Activated CD8-positive, alpha-beta memory T cell treated with anti-CD3 and anti-CD28 coated beads, Interleukin-2, amount 10 ng/mL, durations not matched to agents 7 days and 5 days (primary cell): ENCODE measurements at regions of chr22 and their contacts with region 1.

Region 1: DNA sequence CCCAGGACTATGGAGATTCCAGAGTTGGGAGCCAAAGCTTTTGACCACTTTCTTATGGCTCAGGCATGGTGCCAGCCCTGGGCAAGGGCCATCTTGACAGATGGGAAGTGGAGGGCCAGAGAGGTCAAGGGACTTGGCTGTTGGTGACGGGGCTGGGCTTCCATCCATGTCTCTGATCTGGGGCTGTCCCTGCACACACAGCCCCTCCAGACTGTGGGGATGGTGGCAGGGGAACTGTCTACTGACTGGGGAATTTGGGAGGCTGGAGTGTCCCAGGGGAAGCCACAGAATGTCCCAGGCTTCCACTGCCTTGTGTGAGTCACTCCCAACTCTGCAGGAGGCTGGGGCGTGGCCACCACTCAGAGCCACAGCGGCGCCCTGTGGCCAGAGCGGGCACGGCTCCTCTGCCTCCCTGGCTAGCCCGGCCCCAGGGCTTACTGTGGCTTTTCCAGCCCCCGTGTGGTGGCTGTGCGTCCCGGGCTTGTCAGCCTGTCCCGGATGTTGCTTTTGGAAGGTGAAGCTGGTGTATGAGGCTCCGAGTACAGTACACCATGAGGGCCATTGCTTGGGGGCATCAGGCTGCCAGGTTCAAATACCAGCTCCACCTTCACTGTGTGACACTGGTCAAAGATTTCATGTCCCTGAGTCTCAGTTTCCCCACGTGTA is 19.6 kb downstream of the C22orf23 start:
- DNase-seq: peak; percentile 90
- ATAC-seq: peak; percentile 99
- H3K4me3 Mint-ChIP-seq: no peak overlapping the region
- H3K27ac Mint-ChIP-seq: peak overlapping the region; percentile 36
- H3K4me1 Mint-ChIP-seq: peaks cover 11% of the 10 kb centered on the region
- H3K27me3 Mint-ChIP-seq: no peaks in the 10 kb centered on the region

Region 2: DNA sequence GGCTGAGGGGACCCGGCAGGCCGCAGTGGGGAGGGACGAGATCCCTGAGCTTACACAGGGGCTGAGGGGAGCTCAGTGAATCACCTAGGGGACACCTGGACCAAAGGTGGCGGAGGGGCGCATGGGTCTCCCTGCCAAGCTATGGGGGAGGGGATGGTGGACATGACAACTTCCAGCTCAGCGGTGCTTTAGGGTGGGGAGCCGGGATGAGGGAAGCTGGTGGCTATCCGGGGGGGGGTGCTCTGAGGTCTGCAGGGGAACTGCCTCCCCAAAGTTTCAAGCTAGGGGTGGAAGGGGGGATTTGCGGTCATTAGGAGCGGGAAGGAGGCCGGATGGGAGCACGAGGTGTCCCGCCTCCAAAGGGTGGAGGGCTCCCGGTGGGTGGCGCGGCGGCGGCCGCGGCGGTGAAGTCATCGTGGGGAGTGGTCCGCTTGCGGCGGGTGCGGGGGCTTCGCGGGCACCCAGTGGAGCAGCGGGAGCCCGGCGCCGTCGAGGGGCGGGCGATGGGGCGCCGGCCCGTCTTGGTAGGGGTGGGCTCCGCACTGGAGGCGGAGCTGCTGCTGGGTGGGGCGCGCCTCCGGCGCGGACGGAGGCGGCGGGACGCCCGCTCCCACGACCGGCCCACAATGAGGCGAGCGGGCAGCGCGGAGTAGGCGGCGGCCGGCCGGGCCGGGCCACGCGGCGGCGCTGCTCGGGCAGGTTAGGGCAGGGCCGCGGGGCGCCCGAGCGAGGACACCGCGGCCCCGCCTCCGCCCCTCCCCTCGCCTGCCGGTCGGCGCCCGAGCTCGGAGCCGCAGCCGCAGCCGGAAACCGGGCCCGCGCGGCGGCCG is 28.1 kb before region 1 on chr22 and contains the start of gene MICALL1:
- CTCF ChIA-PET with region 1: interaction called, 16 read pairs
- DNase-seq: peak; percentile 69
- ATAC-seq: peak; percentile 89
- H3K4me3 Mint-ChIP-seq: peak within 1 kb of the TSS; percentile 66
- H3K27ac Mint-ChIP-seq: peak within 1 kb of the TSS; percentile 76
- H3K4me1 Mint-ChIP-seq: peaks cover 30% of the 10 kb centered on the region
- H3K27me3 Mint-ChIP-seq: no peaks in the 10 kb centered on the region
- total RNA-seq, gene MICALL1: 19.7 to 23.1 TPM

Region 3: DNA sequence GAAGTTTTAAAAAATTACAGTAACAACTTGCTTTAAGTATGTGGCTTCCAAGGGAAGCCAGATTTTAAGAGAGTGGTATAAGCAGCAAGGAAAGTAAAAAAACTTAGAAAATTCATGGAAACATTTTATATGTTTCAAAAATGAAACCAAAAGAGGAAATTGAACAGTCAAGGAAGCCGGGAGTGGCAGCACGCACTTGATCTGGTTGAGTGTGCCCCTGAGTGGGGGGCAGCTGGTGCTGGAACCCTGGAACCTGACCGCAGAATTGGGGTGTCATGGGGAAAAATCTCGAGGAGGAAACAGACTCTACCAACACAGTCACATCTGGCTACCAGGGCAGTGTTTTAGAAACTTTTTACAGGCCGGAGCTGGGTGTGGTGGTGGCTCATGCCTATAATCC is 13.7 kb before region 1 on chr22:
- CTCF ChIA-PET with region 1: interaction called, 13 read pairs
- DNase-seq: no peak
- ATAC-seq: peak; percentile 24
- H3K4me3 Mint-ChIP-seq: peak overlapping the region; percentile 21
- H3K27ac Mint-ChIP-seq: peak overlapping the region; percentile 81
- H3K4me1 Mint-ChIP-seq: peaks cover 7% of the 10 kb centered on the region
- H3K27me3 Mint-ChIP-seq: no peaks in the 10 kb centered on the region

Region 4: DNA sequence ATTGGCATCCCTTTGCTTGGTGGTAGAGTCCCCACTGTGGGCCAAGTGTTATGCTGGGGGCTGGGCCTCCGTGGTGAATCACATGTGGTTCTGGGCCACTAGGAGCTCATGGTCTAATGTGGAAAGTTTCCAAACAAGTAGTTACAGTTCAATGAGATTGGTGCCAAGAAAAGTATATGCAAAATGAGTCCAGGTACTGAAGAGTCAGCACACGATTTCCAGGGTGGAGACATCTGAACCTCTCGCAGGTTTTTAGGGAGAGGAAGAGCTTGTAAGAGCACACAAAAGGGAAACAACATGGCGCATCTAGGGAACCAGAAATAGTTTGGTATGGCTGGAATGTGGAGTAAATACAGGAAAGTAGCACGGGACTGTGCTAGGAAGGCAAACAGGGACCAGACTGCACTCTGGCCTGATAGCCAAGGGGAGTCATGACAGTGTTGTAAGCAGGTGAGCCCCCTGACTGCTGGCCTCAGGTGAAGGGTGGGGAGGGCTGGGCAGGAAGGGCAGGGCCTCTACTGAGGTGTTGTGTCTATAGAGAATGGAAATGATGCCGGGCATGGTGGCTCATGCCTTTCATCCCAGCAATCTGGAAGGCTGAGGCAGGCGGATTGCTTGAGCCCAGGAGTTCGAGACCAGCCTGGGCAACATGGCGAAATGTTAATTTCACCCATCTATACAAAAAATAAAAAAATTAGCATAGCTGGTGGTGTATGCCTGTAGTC is 32.3 kb after region 1 on chr22:
- CTCF ChIA-PET with region 1: interaction called, 15 read pairs
- DNase-seq: no peak
- ATAC-seq: no peak
- H3K4me3 Mint-ChIP-seq: no peak overlapping the region
- H3K27ac Mint-ChIP-seq: no peak overlapping the region
- H3K4me1 Mint-ChIP-seq: peaks cover 1% of the 10 kb centered on the region
- H3K27me3 Mint-ChIP-seq: no peaks in the 10 kb centered on the region

Region 5: GRCh38 chr22:37982938-37983859 is 49.4 kb after region 1 on chr22:
- CTCF ChIA-PET with region 1: no interaction called
- DNase-seq: no peak
- ATAC-seq: no peak
- H3K4me3 Mint-ChIP-seq: no peak overlapping the region
- H3K27ac Mint-ChIP-seq: no peak overlapping the region
- H3K4me1 Mint-ChIP-seq: no peaks in the 10 kb centered on the region
- H3K27me3 Mint-ChIP-seq: no peaks in the 10 kb centered on the region